ENCODE measurements at regions of chr6 and their contacts with region 1.

Region 1: DNA sequence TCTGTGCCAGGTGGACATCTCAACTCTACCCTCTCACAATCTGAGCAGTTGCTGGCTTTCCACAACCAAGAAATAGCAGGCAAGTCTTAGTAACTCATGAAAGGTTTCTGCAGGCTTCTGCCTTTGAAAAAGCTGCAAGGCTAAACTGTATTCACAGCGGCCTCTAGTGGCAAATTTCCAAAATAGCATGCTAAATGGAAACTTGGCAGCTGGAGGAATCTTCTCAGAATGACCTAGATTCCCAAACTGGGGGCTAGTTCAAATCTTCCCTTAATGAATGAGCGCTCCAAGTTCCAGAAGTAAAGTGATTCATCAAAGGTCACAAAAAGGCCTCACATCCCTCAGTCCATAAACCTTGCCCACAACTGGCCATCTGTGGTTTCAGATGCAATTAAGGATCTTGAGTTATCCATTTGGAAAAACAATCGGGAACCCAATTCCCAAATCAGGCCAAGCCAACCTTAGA is 11.9 kb upstream of the CPNE5 start:
- DNase-seq: peak; percentile 55
- H3K4me3 Mint-ChIP-seq: no peak overlapping the region
- H3K27ac Mint-ChIP-seq: no peak overlapping the region
- H3K4me1 Mint-ChIP-seq: no peaks in the 10 kb centered on the region
- H3K27me3 Mint-ChIP-seq: peaks cover 15% of the 10 kb centered on the region

Region 2: GRCh38 chr6:36765594-36766398 is 85.4 kb before region 1 on chr6:
- CTCF ChIA-PET with region 1: interaction called, 149 read pairs
- DNase-seq: peak; percentile 91
- H3K4me3 Mint-ChIP-seq: no peak overlapping the region
- H3K27ac Mint-ChIP-seq: no peak overlapping the region
- H3K4me1 Mint-ChIP-seq: peaks cover 45% of the 10 kb centered on the region
- H3K27me3 Mint-ChIP-seq: no peaks in the 10 kb centered on the region

Region 3: DNA sequence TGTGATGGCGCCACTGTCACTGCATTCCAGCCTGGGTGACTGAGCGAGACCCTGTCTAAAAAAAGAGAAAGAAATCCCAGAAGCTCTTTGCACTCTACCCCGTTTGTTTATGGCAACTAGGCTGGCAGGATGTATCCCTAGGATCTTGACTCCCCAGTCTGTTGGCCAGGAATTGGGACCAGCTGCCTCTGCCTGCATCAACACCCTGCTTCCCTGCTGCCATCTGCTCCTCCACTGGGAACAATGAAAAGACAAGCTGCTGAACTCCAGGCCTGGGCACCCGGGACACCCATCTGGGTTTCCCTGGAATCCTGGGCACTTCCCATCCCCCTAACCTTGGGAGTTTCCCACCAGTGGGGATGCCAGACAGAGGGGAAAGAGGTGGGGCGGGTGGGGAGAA is 76.9 kb before region 1 on chr6:
- CTCF ChIA-PET with region 1: interaction called, 149 read pairs
- DNase-seq: no peak
- H3K4me3 Mint-ChIP-seq: no peak overlapping the region
- H3K27ac Mint-ChIP-seq: no peak overlapping the region
- H3K4me1 Mint-ChIP-seq: peaks cover 32% of the 10 kb centered on the region
- H3K27me3 Mint-ChIP-seq: peaks cover 52% of the 10 kb centered on the region

Region 4: DNA sequence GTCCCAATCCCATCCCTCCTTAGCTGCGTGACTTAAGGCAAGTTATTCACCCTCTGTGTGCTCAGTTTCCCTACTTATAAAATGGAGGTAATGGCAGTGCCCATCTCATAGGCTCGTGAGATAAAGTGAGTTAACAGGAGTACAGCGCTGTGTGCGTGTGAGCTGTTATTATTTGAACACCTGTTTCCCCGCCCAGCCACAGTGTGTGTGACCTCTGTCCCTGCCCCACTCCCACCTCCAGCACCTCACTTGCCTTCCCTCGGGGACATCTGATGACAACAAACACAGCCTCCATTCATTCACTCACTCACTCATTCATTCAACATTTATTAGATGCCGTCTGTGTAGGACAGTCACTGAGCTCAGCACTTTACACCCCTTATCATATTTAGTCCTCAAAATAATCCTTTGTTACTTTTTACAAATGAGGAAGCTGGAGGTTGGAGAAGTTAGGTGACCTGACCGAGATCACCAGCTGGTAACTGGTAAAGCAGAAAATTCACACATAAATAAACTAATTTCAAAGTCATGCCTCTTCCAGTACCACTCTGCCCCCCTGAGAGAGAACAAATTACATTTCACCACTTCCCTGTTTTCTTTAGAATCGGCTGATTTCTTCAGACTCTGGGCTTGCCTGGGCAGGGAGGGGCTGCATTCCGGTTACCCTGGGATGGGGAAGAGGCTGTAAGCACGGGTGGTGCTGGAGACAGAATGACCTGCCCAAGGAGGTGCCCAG is 70.6 kb before region 1 on chr6:
- CTCF ChIA-PET with region 1: interaction called, 48 read pairs
- DNase-seq: no peak
- H3K4me3 Mint-ChIP-seq: no peak overlapping the region
- H3K27ac Mint-ChIP-seq: no peak overlapping the region
- H3K4me1 Mint-ChIP-seq: peaks cover 12% of the 10 kb centered on the region
- H3K27me3 Mint-ChIP-seq: peaks cover 70% of the 10 kb centered on the region

Region 5: DNA sequence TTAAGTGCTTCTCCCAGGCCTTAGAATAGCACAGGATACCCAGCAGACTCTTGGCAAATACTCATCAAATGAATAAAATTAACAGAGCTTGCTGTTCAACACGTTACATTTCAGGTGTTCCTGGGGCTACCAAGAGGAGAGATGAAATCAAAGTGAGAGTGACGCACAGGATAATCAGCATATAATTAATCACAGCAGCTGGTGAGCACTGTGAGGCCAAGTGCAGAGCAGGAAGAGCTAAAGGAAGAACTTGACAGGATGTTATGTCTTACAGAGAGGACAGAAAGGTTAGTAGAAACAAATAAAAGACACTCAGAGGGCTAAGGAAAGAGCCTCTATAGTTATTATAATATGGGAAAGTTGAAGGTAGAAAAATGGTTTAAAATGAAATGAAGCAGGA is 14.7 kb after region 1 on chr6:
- CTCF ChIA-PET with region 1: interaction called, 39 read pairs
- DNase-seq: no peak
- H3K4me3 Mint-ChIP-seq: no peak overlapping the region
- H3K27ac Mint-ChIP-seq: no peak overlapping the region
- H3K4me1 Mint-ChIP-seq: peaks cover 42% of the 10 kb centered on the region
- H3K27me3 Mint-ChIP-seq: no peaks in the 10 kb centered on the region

Region 6: GRCh38 chr6:36874443-36875249 is 23.5 kb after region 1 on chr6 and contains the start of gene PPIL1:
- CTCF ChIA-PET with region 1: interaction called, 39 read pairs
- DNase-seq: peak; percentile 86
- H3K4me3 Mint-ChIP-seq: peak within 1 kb of the TSS; percentile 92
- H3K27ac Mint-ChIP-seq: peak within 1 kb of the TSS; percentile 96
- H3K4me1 Mint-ChIP-seq: peaks cover 62% of the 10 kb centered on the region
- H3K27me3 Mint-ChIP-seq: peaks cover 8% of the 10 kb centered on the region

Region 7: GRCh38 chr6:36897609-36898008 is 46.4 kb after region 1 on chr6:
- CTCF ChIA-PET with region 1: no interaction called
- DNase-seq: peak; percentile 58
- H3K4me3 Mint-ChIP-seq: no peak overlapping the region
- H3K27ac Mint-ChIP-seq: no peak overlapping the region
- H3K4me1 Mint-ChIP-seq: peaks cover 3% of the 10 kb centered on the region
- H3K27me3 Mint-ChIP-seq: no peaks in the 10 kb centered on the region

Region 8: DNA sequence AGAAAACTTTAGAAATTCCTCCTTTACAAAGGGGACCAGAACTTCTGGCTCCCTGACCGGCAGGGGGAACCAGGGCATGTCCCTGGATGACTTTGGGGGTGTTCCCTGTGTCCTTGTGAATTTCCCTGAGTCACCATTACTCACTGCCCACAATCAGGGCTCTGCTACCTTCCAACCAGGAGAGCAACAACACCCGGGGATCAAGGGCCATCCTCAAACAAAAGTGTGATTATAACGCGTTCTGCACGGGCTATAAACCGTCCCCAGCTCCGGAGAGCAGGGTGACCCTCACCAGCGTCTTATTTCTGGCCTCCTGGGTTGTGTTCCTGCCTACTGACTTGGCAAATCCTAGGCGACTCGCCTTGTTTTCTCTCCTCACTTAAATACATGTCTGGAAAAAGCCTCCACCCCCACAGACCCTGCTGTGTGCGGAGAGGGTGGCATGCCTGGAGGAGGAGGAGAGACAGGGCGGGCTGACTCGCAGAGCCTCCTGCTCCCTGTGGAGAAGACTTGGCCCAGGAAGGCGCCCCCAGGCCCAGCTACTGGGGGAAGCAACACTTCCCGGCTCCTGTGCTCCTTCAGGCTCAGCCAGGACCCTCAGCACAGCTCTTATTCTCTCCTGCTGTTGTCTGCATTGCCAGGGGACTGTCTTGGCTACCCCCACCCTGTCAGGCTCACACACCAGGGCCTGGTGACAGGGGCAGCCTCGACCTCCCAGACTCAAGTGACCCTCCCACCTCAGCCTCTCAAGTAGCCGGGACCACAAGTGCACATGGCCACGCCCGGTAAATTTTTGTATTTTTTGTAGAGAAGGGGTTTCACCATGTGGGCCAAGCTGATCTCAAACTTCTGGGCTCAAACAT is 208.4 kb after region 1 on chr6:
- CTCF ChIA-PET with region 1: no interaction called
- DNase-seq: no peak
- H3K4me3 Mint-ChIP-seq: no peak overlapping the region
- H3K27ac Mint-ChIP-seq: no peak overlapping the region
- H3K4me1 Mint-ChIP-seq: peaks cover 14% of the 10 kb centered on the region
- H3K27me3 Mint-ChIP-seq: peaks cover 4% of the 10 kb centered on the region